Gastrocnemius medialis (tissue), 4 donors: ENCODE measurements at regions of chr10 and their contacts with region 1.

Region 1: DNA sequence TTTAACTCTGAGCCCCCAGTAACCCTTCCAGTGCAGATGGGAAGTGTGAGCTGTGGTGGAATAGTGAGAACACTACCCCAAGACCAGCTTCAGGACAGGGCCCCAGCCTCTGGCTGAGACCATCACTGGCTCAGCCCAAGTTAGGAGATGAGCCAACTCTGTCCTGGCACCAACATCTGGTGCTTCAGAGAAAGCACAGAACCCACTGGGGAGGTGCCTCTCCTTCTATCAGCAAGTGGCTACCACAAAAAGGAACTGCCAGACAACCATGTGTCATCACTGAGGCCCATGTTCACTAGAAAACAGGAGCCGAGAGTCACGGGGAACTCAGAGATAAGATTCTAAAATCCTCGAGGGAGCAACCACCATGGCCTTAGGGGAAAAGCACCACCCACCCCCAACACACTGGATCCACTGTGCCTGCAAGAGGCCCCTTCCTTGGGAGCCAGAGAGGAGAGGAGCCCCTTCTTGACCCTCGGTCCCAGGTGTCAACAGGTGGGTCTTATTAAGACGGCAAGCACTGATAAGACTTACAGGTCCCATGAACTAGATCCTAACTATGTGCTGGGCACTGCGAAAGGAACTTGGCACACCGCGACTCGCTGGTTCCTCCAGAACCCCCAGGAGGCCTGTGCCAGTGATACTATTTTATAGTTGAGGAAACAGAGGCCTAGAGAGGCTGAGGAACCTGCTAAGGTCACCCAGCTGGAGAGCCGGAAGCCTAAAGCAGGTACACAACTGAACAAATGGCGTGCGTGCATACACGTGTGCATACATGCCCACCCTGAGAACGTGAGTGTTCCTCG is 102.7 kb downstream of the FAM53B start:
- DNase-seq: no peak
- ATAC-seq: peak; percentile 20 to 25
- H3K4me3 ChIP-seq: no peak overlapping the region
- H3K27ac ChIP-seq: peak overlapping the region; percentile 22 to 64 (median 26)
- H3K4me1 ChIP-seq: peaks cover 60 to 67% of the 10 kb centered on the region in 2 donors
- H3K27me3 ChIP-seq: no peaks in the 10 kb centered on the region
- CTCF ChIP-seq: no peak
- POLR2A ChIP-seq: no peak

Region 2: GRCh38 chr10:124660404-124661125 is 19.1 kb after region 1 on chr10:
- in situ Hi-C with region 1: no loop called
- intact Hi-C with region 1: loop called (anchors 2 kb)
- DNase-seq: no peak
- ATAC-seq: peak; percentile 34 to 62
- H3K4me3 ChIP-seq: no peak overlapping the region
- H3K27ac ChIP-seq: peak overlapping the region; percentile 57 to 79 (median 68)
- H3K4me1 ChIP-seq: peaks cover 43 to 48% of the 10 kb centered on the region in 2 donors
- H3K27me3 ChIP-seq: no peaks in the 10 kb centered on the region
- CTCF ChIP-seq: no peak
- POLR2A ChIP-seq: no peak

Region 3: DNA sequence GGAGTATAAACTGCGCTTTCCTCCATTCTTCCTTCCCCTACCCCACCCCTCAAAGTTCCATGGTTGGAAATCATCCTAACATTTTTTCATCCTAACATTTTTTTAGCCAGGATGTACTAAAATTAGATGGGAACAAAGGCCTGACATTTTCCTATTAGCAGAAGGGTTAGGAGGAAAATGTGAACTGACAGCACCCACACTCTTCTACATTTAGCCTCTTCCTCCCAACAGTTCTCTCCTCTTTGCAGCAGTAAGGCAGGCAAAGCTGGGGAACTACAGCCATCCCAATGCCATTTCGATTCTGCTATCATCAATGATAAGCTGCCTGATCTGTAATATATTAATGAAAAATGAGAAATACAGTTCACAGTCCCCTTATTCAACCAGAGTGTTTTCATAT is 114.1 kb after region 1 on chr10:
- in situ Hi-C with region 1: no loop called
- intact Hi-C with region 1: no loop called
- DNase-seq: no peak
- ATAC-seq: no peak
- H3K4me3 ChIP-seq: no peak overlapping the region
- H3K27ac ChIP-seq: no peak overlapping the region
- H3K4me1 ChIP-seq: peaks cover 14 to 37% of the 10 kb centered on the region in 2 donors
- H3K27me3 ChIP-seq: no peaks in the 10 kb centered on the region
- CTCF ChIP-seq: no peak
- POLR2A ChIP-seq: no peak